ENCODE measurements at regions of chr5 and their contacts with region 1.

Region 1: GRCh38 chr5:61817472-61818326 is 485.6 kb downstream of the ZSWIM6 start:
- DNase-seq: peak; percentile 72
- H3K4me3 ChIP-seq: no peak overlapping the region
- H3K27ac ChIP-seq: no peak overlapping the region
- H3K4me1 ChIP-seq: peaks cover 0 to 14% (median 6%) of the 10 kb centered on the region in 4 donors
- H3K27me3 ChIP-seq: no peaks in the 10 kb centered on the region
- CTCF ChIP-seq: peak; percentile 37 to 62 (median 46)
- EP300 ChIP-seq: no peak
- POLR2A ChIP-seq: no peak

Region 2: GRCh38 chr5:61673007-61673735 is 144.5 kb before region 1 on chr5:
- intact Hi-C with region 1: loop called (anchors 10 kb)
- DNase-seq: peak; percentile 89
- H3K4me3 ChIP-seq: no peak overlapping the region
- H3K27ac ChIP-seq: no peak overlapping the region
- H3K4me1 ChIP-seq: peaks cover 0 to 6% (median 2%) of the 10 kb centered on the region in 4 donors
- H3K27me3 ChIP-seq: no peaks in the 10 kb centered on the region
- CTCF ChIP-seq: no peak
- EP300 ChIP-seq: no peak
- POLR2A ChIP-seq: no peak

Region 3: DNA sequence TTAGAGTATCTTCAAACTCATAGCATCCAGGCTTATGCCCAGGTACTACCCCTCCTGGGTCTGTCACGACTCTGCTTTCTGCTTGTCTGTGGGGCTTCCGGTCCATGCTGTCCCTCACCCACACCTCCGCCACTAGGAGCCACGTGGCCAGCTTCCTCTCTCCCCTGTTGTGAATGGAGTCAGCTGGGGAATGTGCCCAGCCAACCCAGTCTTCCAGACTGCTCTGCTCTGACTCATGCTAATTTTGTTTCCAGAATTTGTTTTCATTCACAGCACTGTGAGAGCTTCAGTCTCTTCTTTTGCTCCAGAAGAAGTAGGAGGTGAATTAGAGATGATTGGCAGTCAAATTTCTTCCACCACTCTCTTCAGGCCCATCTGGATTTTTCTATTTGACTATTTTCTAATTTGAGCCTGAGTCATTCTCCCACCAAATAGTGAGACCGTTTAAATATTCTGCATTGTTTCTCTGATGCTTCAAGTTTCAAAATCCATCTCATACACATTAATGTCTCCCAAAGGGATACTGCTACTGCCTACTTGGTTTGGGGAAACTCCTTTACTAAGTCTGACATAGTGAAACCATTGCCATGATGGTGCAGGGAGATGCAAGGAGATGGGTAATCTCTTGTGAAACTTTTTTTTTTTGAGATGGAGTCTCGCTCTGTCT is 64.3 kb after region 1 on chr5:
- intact Hi-C with region 1: no loop called
- DNase-seq: no peak
- H3K4me3 ChIP-seq: no peak overlapping the region
- H3K27ac ChIP-seq: no peak overlapping the region
- H3K4me1 ChIP-seq: peaks cover 0 to 20% (median 13%) of the 10 kb centered on the region in 4 donors
- H3K27me3 ChIP-seq: no peaks in the 10 kb centered on the region
- CTCF ChIP-seq: no peak
- EP300 ChIP-seq: no peak
- POLR2A ChIP-seq: no peak